ENCODE measurements at regions of chr5 and their contacts with region 1.

Region 1: DNA sequence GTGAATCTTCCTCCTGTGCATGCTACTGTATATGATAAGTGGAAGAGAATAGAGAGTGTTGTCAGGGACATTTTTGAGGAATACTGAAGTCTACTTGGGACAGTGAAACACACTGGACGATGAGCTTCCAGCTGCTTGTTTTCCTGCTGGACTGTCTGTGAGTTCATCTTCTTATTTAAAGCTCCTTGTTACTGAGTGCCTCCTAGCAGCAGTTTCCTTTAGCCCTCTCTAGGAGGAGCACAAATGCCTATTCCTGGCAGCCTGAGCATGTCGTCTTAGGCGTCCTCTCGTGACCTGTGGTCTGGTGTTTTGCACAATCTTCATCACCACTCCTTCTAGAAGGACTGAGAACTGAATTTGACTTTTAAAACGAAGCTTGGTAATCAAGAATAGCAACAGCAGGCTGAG is 43.8 kb downstream of the ANKRD33B start:
- DNase-seq: peak; percentile 41 to 82 (median 54)
- ATAC-seq: peak; percentile 92
- H3K4me3 ChIP-seq: no peak overlapping the region
- H3K27ac ChIP-seq: peak overlapping the region; percentile 24
- H3K4me1 ChIP-seq: peaks cover 29% of the 10 kb centered on the region in 2 experiments
- H3K27me3 ChIP-seq: no peaks in the 10 kb centered on the region
- CTCF ChIP-seq: peak; percentile 49 to 56 (median 54)
- EP300 ChIP-seq: peak; percentile 16; the same call in 1 of the 2 replicates
- POLR2A ChIP-seq: no peak
- RAD21 ChIP-seq: peak; percentile 58 to 68

Region 2: DNA sequence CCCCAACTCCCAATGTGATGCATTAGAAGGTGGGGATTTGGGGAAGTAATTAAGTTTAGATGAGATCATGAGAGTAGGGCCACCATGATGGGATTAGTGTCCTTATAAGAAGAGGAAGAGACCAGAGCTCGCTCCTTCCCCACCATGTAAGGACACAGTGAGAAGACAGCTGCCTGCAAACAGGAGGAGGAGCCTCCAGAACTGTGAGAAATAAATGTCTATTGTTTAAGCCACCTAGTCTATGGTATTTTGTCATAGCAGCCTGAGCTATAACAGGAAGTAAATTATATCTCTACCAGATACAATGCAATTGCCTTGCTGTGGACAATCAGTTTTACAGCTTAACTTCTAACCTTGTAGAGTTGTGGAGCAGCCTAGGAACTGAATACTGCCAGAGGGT is 14.2 kb after region 1 on chr5:
- CTCF ChIA-PET with region 1: no interaction called
- POLR2A ChIA-PET with region 1: interaction called, 13 read pairs
- in situ Hi-C with region 1: no loop called
- intact Hi-C with region 1: loop called (anchors 2 kb)
- DNase-seq: no peak
- ATAC-seq: no peak
- H3K4me3 ChIP-seq: no peak overlapping the region
- H3K27ac ChIP-seq: no peak overlapping the region
- H3K4me1 ChIP-seq: peaks cover 0 to 11% of the 10 kb centered on the region in 2 experiments; a peak in 2 of 5 replicates
- H3K27me3 ChIP-seq: peaks cover 10 to 40% of the 10 kb centered on the region in 2 experiments; a peak in 3 of 5 replicates
- CTCF ChIP-seq: no peak
- EP300 ChIP-seq: no peak
- POLR2A ChIP-seq: no peak
- RAD21 ChIP-seq: no peak

Region 3: DNA sequence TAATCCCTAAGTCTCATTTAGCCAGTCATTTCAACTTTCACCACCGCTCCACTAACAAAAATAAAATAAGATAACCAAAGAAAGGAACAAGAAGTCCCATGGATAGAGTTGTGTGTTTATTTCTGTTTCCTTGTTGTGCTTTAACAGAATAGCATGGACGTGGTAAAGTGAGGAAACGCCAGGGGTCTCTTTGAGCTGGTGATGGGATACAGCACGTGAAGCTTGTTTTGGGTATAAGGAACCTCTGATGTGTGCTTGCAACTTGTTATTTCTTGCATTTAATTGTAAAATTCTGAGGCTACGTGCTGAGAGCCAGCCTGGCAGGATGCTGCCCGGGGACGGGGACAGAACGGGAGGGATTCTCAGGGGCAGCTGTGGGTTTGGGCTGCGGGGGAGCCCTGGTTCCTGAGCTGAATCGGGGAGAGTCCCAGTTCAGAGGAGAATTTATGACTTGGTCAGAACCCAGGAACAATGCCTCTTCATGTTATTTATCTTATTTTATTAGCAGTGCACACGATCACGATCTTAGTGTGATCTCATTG is 19.6 kb after region 1 on chr5:
- CTCF ChIA-PET with region 1: no interaction called
- POLR2A ChIA-PET with region 1: interaction called, 13 read pairs
- in situ Hi-C with region 1: no loop called
- intact Hi-C with region 1: loop called (anchors 2 kb)
- DNase-seq: peak in 2 of 4 experiments; percentile 48 to 49
- ATAC-seq: peak; percentile 40
- H3K4me3 ChIP-seq: peak overlapping the region; percentile 34; the same call in 1 of the 2 replicates
- H3K27ac ChIP-seq: no peak overlapping the region
- H3K4me1 ChIP-seq: peaks cover 3 to 17% of the 10 kb centered on the region in 2 experiments; a peak in 3 of 5 replicates
- H3K27me3 ChIP-seq: peaks cover 18 to 44% of the 10 kb centered on the region in 2 experiments
- CTCF ChIP-seq: no peak
- EP300 ChIP-seq: no peak
- POLR2A ChIP-seq: no peak
- RAD21 ChIP-seq: no peak

Measured in K562 (cell line).